ENCODE measurements at regions of chr7 and their contacts with region 1.

Region 1: DNA sequence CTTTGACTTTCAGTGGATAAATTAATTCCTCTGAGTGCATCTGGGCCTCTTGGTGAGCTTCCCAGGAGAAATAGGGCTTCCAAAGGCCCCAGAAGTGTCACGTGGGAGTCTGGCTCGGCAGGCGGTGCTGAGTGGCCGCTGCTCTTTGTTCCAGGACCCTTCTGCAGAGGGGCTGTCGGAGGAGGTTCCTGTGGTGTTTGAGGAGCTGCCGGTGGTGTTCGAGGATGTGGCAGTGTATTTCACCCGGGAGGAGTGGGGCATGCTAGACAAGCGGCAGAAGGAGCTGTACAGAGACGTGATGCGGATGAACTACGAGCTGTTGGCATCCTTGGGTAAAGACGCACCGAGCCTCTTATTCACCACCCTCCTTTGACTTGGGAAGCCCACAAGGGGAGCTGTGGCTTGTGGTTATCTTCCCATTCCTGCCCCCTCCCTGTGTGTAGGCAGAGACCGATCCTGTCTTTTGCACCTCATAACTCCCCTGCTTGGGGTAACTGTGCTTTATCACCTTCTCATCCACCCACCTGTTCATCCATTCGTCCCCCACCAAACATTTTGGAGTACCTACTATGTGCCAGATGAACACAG is 11.9 kb downstream of the ZNF862 start:
- DNase-seq: peak in 1 of 4 experiments; percentile 39
- ATAC-seq: peak; percentile 73
- H3K4me3 ChIP-seq: no peak overlapping the region
- H3K27ac ChIP-seq: no peak overlapping the region
- H3K4me1 ChIP-seq: peaks cover 5 to 10% of the 10 kb centered on the region in 2 experiments
- H3K27me3 ChIP-seq: peaks cover 51 to 59% of the 10 kb centered on the region in 2 experiments
- CTCF ChIP-seq: peak; percentile 31 to 42 (median 41); a peak in 4 of 6 replicates
- EP300 ChIP-seq: no peak
- POLR2A ChIP-seq: no peak
- RAD21 ChIP-seq: no peak

Region 2: GRCh38 chr7:149806726-149807125 is 43.4 kb before region 1 on chr7:
- CTCF ChIA-PET with region 1: interaction called, 13 read pairs
- POLR2A ChIA-PET with region 1: no interaction called
- in situ Hi-C with region 1: no loop called
- intact Hi-C with region 1: loop called (anchors 2 kb)
- DNase-seq: no peak
- ATAC-seq: no peak
- H3K4me3 ChIP-seq: no peak overlapping the region
- H3K27ac ChIP-seq: no peak overlapping the region
- H3K4me1 ChIP-seq: peaks cover 0 to 37% of the 10 kb centered on the region in 2 experiments; a peak in 2 of 5 replicates
- H3K27me3 ChIP-seq: peaks cover 9 to 74% of the 10 kb centered on the region in 2 experiments; a peak in 4 of 5 replicates
- CTCF ChIP-seq: no peak
- EP300 ChIP-seq: no peak
- POLR2A ChIP-seq: no peak
- RAD21 ChIP-seq: no peak

Region 3: DNA sequence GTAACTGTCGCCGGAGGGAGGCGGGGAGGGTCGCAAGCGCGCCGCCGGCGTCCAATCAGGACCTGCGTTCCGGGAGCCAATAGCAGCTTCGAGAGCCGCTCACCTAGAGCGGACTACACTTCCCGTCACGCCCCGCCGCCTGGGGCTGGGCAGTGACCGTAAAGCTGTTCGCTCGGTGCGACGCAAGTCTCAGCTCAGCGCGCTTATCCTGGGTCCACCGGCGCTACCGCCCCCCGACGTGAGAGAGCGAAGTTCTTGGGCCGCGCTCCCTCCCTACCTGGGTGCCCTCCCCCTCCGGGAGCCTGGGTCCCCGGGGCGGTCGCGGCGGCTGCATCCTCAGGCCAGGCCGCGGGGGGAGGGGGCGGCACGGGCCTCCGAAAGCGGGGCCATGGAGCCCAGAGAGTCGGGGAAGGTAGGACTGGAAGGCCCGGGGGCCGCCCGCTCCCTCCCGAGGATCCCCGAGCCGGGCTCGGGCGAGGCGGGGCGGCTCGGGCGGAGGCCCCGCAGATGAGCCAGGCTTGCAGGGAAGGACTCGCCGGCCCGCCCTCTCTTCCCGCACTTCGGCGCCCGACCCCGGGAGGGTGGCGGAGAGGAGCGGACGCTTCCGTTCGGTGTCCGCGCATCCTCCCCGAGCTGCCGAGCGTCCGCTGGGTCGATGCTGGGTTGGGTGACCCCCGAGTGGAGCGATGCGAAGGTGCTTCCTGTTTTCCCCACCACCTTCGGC is 11.7 kb before region 1 on chr7 and contains the start of gene ZNF862:
- CTCF ChIA-PET with region 1: no interaction called
- POLR2A ChIA-PET with region 1: interaction called, 29 read pairs
- in situ Hi-C with region 1: no loop called
- intact Hi-C with region 1: no loop called
- DNase-seq: peak; percentile 100
- ATAC-seq: peak; percentile 99
- H3K4me3 ChIP-seq: peak within 1 kb of the TSS; percentile 84
- H3K27ac ChIP-seq: peak within 1 kb of the TSS; percentile 19; the same call in 2 of the 3 replicates
- H3K4me1 ChIP-seq: peaks cover 11 to 14% of the 10 kb centered on the region in 2 experiments; a peak in 4 of 5 replicates
- H3K27me3 ChIP-seq: peaks cover 28 to 32% of the 10 kb centered on the region in 2 experiments
- CTCF ChIP-seq: 0 out of 6 replicates have a peak, but pooled peaks of 2 of the 3 experiments have one; percentile 3 to 14
- EP300 ChIP-seq: 0 out of 2 replicates have a peak, but pooled peaks have one; percentile 8
- POLR2A ChIP-seq: peak; percentile 73
- RAD21 ChIP-seq: no peak
- polyA plus RNA-seq, gene ZNF862: 1.1 to 1.5 TPM

Region 4: DNA sequence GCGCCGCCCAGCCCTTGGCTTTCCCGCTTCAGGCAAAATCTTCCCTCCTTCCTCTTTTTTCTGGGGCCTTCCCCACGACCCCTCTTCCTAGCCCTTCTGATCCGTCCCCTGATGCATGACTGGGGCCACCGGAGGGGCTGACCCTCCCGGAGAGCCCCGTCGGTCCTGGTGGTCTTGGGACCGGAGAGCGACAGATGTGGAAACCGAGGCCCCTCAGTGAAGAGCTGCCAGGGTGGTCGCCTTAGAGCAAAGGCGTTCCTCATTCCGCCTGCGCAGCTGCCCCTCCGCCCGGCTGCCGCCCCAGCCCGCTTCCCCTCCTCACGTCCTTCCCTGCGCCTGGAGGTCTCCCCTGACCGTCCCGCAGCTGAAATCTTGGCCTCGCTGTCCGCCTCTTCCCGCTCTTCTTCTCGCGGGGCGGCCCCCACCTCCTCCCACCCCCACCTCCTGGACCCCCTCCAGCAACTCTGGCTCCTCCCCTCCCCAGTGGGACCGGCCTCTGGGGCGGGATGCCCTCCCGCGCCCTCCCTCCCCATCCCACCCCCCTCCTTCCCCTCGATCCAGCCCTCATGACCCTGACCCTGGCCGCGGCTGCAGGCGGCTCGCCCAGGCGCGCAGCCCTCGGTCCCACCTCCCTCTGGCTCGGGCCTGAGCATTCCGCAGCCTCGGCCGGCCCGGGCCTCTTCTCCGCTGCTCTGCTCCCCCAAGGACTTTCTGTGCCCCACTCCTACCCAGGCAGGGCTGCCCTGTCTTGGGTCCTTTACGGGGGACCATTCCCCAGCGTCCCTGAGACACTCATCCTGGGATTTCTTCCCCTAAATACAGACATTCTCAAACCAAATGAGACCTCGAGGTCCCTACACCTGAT is 491.4 kb after region 1 on chr7 and contains the start of gene RARRES2:
- CTCF ChIA-PET with region 1: no interaction called
- POLR2A ChIA-PET with region 1: no interaction called
- in situ Hi-C with region 1: no loop called
- intact Hi-C with region 1: no loop called
- DNase-seq: peak in 2 of 4 experiments; percentile 56 to 58
- ATAC-seq: peak; percentile 36
- H3K4me3 ChIP-seq: no peak within 1 kb of the TSS
- H3K27ac ChIP-seq: no peak within 1 kb of the TSS
- H3K4me1 ChIP-seq: peaks cover 0 to 36% of the 10 kb centered on the region in 2 experiments; a peak in 3 of 5 replicates
- H3K27me3 ChIP-seq: peaks cover 11 to 19% of the 10 kb centered on the region in 2 experiments; a peak in 4 of 5 replicates
- CTCF ChIP-seq: no peak
- EP300 ChIP-seq: no peak
- POLR2A ChIP-seq: no peak
- RAD21 ChIP-seq: no peak
- polyA plus RNA-seq, gene RARRES2: not detected

Region 5: GRCh38 chr7:151524306-151524705 is 1674.2 kb after region 1 on chr7:
- CTCF ChIA-PET with region 1: no interaction called
- POLR2A ChIA-PET with region 1: no interaction called
- in situ Hi-C with region 1: no loop called
- intact Hi-C with region 1: no loop called
- DNase-seq: no peak
- ATAC-seq: no peak
- H3K4me3 ChIP-seq: no peak overlapping the region
- H3K27ac ChIP-seq: no peak overlapping the region
- H3K4me1 ChIP-seq: peaks cover 4 to 10% of the 10 kb centered on the region in 2 experiments; a peak in 4 of 5 replicates
- H3K27me3 ChIP-seq: peaks cover 4 to 6% of the 10 kb centered on the region in 2 experiments; a peak in 4 of 5 replicates
- CTCF ChIP-seq: no peak
- EP300 ChIP-seq: no peak
- POLR2A ChIP-seq: no peak
- RAD21 ChIP-seq: no peak